ENCODE measurements at regions of chr9 and their contacts with region 1.

Region 1: DNA sequence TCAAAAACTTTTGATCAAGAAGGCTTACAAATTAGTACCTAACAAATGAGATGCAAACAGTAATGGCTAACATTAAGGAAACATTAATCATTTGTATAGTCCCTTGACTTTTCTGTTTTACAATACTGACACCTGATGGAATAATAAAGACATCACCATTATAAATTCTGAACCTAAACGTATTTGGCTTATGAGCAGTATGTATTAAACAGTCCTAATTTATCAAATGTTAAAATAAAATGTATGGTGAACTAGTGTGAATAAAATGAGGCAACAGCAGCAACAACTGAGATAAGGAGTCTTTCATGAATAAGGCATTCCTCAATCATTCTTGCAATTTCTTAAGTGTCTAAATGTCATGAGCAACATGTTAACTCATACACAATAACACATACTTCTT is 6.0 kb downstream of the PUM3 start:
- DNase-seq: no peak
- ATAC-seq: no peak
- H3K4me3 ChIP-seq: no peak overlapping the region
- H3K27ac ChIP-seq: peak overlapping the region in 1 of 2 donors; percentile 30
- H3K4me1 ChIP-seq: peaks cover 0 to 17% of the 10 kb centered on the region in 2 donors
- H3K27me3 ChIP-seq: no peaks in the 10 kb centered on the region

Region 2: DNA sequence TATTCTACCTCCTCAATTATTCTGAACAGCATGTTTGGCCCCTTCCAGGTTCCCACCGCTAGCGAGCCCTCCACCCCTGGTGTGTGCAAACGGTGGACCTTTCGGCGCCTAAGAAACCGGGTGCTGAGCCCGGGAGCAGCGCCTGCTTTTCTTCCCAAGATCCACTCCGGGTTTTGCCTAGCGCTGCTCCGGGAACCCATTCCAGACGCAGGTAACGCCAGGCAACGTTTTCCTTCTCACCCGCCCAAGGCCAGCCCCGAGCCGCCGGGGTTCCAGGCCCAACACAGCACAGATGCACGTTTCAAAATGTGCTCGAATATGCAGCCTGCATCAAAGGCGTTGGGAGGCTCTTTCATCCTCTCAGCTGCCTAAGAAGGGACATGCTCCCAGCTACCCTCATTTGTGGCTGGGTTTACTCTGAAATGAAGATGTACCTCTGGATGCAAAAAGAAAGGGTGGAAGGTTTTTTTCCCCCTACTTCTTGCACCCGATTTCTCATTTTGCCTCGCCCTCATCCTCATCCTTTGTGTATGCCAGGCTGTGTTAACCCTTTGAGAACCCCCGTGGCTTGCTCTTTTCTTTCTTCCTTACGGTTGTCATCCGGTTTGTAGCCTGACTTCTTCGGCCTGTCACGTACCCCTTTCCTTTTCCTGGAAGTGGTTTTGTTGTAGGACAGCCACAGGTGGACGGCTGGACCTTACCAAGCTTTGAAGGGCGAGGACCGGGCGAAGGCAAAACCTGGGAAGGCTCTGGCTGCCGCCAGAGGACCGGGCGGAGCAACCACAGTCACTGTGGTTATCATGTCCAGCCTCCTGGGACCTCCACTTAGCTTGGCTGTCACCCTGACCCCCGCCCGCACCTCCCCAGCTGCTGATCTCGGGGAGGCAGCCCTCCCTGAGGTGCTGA is 595.8 kb before region 1 on chr9:
- intact Hi-C with region 1: loop called (anchors 5 to 10 kb)
- DNase-seq: peak; percentile 83 to 91
- ATAC-seq: peak; percentile 96
- H3K4me3 ChIP-seq: peak overlapping the region; percentile 50 to 72
- H3K27ac ChIP-seq: peak overlapping the region in 1 of 2 donors; percentile 16
- H3K4me1 ChIP-seq: no peaks in the 10 kb centered on the region
- H3K27me3 ChIP-seq: no peaks in the 10 kb centered on the region

Region 3: GRCh38 chr9:2469681-2470221 is 368.2 kb before region 1 on chr9:
- intact Hi-C with region 1: loop called in 1 of 2 experiments (anchors 10 kb)
- DNase-seq: no peak
- ATAC-seq: peak; percentile 36
- H3K4me3 ChIP-seq: no peak overlapping the region
- H3K27ac ChIP-seq: no peak overlapping the region
- H3K4me1 ChIP-seq: no peaks in the 10 kb centered on the region
- H3K27me3 ChIP-seq: no peaks in the 10 kb centered on the region

Region 4: DNA sequence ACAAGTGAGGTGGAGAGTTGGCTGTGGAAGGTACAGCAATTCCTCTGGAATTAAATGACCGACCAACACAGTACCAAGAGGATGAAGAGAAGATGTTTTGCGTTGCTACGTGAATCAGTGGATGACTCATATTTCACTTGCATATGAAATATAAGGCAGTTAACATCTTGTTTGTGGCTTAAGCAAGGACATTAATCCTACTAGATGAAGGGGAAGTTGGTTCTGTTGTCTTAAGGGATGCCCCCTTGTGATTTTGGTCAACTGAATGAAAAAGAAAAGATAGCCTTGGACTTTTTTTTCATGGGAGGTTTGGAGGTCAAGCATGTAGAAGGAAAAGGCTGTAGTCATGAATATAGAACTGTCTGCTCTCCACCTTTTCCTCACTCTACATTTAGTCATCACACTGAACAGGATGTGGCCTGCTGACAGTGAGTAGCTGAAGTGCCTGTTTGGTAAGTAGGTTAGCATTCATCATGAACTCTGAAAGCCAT is 182.5 kb before region 1 on chr9:
- intact Hi-C with region 1: loop called in 1 of 2 experiments (anchors 10 kb)
- DNase-seq: no peak
- ATAC-seq: peak; percentile 39
- H3K4me3 ChIP-seq: no peak overlapping the region
- H3K27ac ChIP-seq: no peak overlapping the region
- H3K4me1 ChIP-seq: no peaks in the 10 kb centered on the region
- H3K27me3 ChIP-seq: no peaks in the 10 kb centered on the region

Region 5: DNA sequence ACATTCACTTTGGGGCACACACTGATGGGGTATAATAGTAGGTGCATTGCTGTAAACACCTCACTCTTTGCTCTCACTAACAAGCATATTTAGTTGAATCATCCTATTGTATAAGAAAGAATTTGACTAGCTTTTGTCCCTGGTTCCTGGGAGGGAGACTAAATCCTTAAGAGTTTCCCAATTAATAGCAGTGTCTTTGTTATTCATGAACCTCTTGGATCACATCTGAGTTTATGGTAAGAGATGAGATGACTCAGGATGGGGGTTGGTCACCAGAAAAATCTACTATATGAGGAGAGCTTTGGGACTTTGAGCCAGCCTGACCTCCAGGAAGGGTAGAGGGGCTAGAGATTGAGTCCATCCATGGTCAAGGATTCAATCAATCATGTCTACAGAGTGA is 50.9 kb before region 1 on chr9:
- intact Hi-C with region 1: no loop called
- DNase-seq: no peak
- ATAC-seq: no peak
- H3K4me3 ChIP-seq: no peak overlapping the region
- H3K27ac ChIP-seq: no peak overlapping the region
- H3K4me1 ChIP-seq: no peaks in the 10 kb centered on the region
- H3K27me3 ChIP-seq: no peaks in the 10 kb centered on the region